Posterior vena cava (tissue), 2 donors: ENCODE measurements at regions of chr15 and their contacts with region 1.

Region 1: DNA sequence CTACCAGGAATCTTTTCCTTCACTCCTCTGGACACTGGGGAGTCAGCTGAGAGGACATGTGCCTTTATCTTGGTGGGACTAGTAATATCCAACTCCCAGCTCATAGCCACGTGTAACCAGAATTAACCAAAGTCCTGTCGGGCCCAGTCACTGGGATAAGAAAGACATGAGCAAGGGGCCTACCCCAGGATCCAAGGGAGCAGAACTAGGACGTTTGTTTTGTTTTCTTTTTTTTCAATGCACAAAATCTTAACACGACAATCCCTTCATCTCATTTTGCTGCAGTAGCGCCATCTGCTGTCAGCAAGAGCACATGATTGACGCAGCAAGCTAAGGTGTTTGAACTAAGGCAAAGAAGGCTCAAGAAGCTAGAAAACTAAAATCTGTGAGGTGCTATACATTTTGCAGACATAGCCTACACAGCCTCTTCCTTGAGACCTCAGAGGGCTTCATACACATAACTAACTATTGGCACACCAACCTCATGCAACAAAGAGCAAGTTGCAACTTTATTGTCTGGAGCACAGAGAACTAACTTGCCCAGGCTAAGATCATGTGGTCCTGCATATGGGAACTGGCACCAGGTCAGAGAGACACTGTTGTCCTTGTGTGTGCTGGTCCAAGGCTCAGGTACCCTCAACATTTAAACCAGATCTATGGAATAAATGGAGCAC is 43.6 kb downstream of the RLBP1 start:
- DNase-seq: no peak

Region 2: DNA sequence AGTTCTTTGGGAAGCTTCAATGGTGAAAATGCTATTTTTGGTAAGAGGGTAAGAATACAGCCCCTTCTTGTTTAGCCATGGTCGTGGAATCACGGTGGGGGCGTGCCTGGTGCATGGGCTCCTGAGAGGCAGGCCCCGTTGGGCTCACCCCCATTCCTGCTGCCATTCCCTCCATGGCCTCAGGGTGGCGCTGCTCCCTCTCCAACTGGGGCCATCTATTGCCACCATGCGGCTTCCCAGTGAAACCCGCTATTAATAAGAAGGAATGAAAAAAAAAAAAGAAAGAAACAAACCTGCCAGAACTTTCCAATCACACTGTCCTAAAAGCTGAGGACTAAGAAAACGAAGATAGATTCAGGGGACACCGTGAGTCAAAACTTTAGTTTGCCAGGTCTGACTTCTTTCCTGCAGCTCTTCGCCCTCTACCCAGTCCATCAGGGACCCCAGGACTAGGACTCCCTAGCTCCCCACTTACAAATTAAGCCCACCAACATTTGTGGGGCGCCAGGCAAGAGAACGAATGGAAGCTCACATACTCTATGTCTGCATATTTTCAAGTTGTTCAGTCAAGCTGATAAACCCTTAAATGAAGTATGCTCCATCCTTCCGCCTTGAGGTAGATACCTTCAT is 120.2 kb before region 1 on chr15:
- intact Hi-C with region 1: loop called (anchors 2 to 5 kb)
- DNase-seq: peak; percentile 94

Region 3: DNA sequence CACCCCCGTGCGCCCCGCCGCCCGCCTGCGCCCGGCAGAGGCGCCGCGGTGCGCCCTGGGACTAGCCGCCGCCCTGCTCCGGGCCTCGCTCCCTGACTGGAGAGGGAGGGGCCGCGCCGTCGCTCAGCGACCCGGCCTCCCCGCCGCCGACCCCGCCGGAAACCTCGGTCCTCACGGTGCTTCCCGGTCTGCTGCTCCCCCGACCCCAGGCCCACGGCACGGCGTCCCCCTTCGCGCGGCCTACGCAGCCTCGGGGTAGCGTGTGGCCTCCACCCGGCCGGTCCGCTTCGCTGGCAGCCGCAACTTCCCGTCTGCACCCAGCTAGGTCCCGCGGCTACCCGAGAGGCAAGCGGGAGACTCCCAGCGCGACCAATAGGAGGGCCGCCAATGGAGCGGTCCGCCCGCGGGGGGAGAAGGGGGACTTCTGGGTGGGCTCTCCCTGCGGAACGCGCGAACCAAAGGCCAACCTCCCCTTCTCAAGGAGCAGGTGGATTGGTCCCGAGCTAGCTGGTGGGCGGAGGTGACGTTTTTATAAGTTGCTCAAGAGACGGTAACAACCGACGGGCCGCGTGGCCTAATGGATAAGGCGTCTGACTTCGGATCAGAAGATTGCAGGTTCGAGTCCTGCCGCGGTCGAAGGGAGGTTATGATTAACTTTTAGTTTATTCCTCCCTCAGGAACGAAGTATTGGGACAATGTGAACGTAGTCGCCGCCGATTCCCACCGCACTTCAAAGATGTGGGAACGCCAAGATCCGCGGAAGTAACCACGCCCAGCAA is 156.9 kb after region 1 on chr15 and contains the start of gene POLG:
- intact Hi-C with region 1: no loop called
- DNase-seq: peak; percentile 99
- total RNA-seq, gene POLG: 45.6 to 47.9 TPM